CD8-positive, alpha-beta memory T cell (primary cell): ENCODE measurements at regions of chr3 and their contacts with region 1.

Region 1: GRCh38 chr3:13895155-13896105 is 15.6 kb upstream of the WNT7A start:
- DNase-seq: peak; percentile 91 to 95 (median 92)
- H3K4me3 ChIP-seq: peak overlapping the region; percentile 71
- H3K4me3 Mint-ChIP-seq: peak overlapping the region; percentile 71 to 98 (median 92)
- H3K27ac ChIP-seq: peak overlapping the region; percentile 66
- H3K27ac Mint-ChIP-seq: peak overlapping the region; percentile 17 to 99 (median 90)
- H3K4me1 ChIP-seq: peaks cover 31% of the 10 kb centered on the region
- H3K4me1 Mint-ChIP-seq: peaks cover 35 to 40% (median 36%) of the 10 kb centered on the region in 3 donors
- H3K27me3 ChIP-seq: no peaks in the 10 kb centered on the region
- H3K27me3 Mint-ChIP-seq: peaks cover 0 to 6% of the 10 kb centered on the region in 2 donors

Region 2: GRCh38 chr3:13884851-13885703 is 10.4 kb before region 1 on chr3:
- CTCF ChIA-PET with region 1: interaction called, 46 read pairs
- POLR2A ChIA-PET with region 1: interaction called, 3 read pairs
- DNase-seq: peak; percentile 51 to 77 (median 59)
- H3K4me3 ChIP-seq: no peak overlapping the region
- H3K4me3 Mint-ChIP-seq: peak overlapping the region in 1 of 7 donors; percentile 20
- H3K27ac ChIP-seq: no peak overlapping the region
- H3K27ac Mint-ChIP-seq: no peak overlapping the region
- H3K4me1 ChIP-seq: peaks cover 13% of the 10 kb centered on the region
- H3K4me1 Mint-ChIP-seq: peaks cover 6 to 11% (median 7%) of the 10 kb centered on the region in 3 donors
- H3K27me3 ChIP-seq: peaks cover 20% of the 10 kb centered on the region
- H3K27me3 Mint-ChIP-seq: peaks cover 22 to 39% of the 10 kb centered on the region in 2 donors

Region 3: GRCh38 chr3:14124615-14125190 is 229.3 kb after region 1 on chr3 and contains the starts of genes CHCHD4 and TMEM43:
- CTCF ChIA-PET with region 1: interaction called, 12 read pairs
- POLR2A ChIA-PET with region 1: no interaction called
- DNase-seq: peak; percentile 97 to 100 (median 98)
- H3K4me3 ChIP-seq: peak within 1 kb of the TSS; percentile 99
- H3K4me3 Mint-ChIP-seq: peak within 1 kb of the TSS; percentile 93 to 99 (median 97)
- H3K27ac ChIP-seq: peak within 1 kb of the TSS; percentile 94
- H3K27ac Mint-ChIP-seq: peak within 1 kb of the TSS; percentile 95 to 99 (median 98)
- H3K4me1 ChIP-seq: peaks cover 34% of the 10 kb centered on the region
- H3K4me1 Mint-ChIP-seq: peaks cover 54 to 73% (median 65%) of the 10 kb centered on the region in 3 donors
- H3K27me3 ChIP-seq: no peaks in the 10 kb centered on the region
- H3K27me3 Mint-ChIP-seq: peaks cover 0 to 5% of the 10 kb centered on the region in 2 donors
- total RNA-seq, gene CHCHD4: 21.7 to 21.8 TPM
- total RNA-seq, gene TMEM43: 48.8 to 49.4 TPM

Region 4: GRCh38 chr3:14178247-14179113 is 283.1 kb after region 1 on chr3 and contains the starts of genes LSM3 and XPC:
- CTCF ChIA-PET with region 1: interaction called, 7 read pairs
- POLR2A ChIA-PET with region 1: interaction called, 10 read pairs
- DNase-seq: peak; percentile 96 to 100 (median 98)
- H3K4me3 ChIP-seq: peak within 1 kb of the TSS; percentile 79
- H3K4me3 Mint-ChIP-seq: peak within 1 kb of the TSS; percentile 92 to 100 (median 98)
- H3K27ac ChIP-seq: peak within 1 kb of the TSS; percentile 96
- H3K27ac Mint-ChIP-seq: peak within 1 kb of the TSS; percentile 94 to 100 (median 99)
- H3K4me1 ChIP-seq: peaks cover 44% of the 10 kb centered on the region
- H3K4me1 Mint-ChIP-seq: peaks cover 58 to 82% (median 79%) of the 10 kb centered on the region in 3 donors
- H3K27me3 ChIP-seq: no peaks in the 10 kb centered on the region
- H3K27me3 Mint-ChIP-seq: peaks cover 0 to 2% of the 10 kb centered on the region in 2 donors
- total RNA-seq, gene LSM3: 25.8 to 26.6 TPM
- total RNA-seq, gene XPC: 38.8 to 38.9 TPM

Region 5: DNA sequence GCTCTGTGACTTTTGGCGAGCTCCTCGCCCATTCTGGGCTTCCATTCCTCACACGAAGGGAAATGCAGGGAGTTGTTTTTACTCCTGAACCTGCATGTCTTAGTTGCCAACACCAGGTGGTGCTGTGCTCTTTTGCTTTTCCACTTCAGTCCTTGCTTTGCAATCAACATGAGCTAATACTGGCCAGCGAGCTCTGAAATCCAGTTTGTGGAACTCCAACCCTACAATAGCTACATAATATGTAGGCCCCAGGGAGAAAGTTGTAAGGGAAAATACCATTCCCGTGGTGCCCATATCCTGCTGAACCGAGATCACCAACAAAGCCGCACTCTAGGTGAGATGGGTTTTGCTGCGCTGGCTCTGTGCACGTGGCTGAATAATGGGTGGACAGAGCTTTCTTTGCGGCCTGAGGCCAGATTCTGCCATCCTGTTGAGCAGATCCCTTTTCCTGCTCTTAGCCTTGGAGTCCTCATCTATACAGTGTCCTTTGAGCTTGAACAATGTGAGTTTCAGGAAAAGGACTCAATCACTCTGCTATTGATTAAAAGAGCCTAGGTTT is 308.2 kb after region 1 on chr3:
- CTCF ChIA-PET with region 1: interaction called, 19 read pairs
- POLR2A ChIA-PET with region 1: no interaction called
- DNase-seq: peak in 4 of 5 donors; percentile 10 to 62 (median 24)
- H3K4me3 ChIP-seq: no peak overlapping the region
- H3K4me3 Mint-ChIP-seq: no peak overlapping the region
- H3K27ac ChIP-seq: no peak overlapping the region
- H3K27ac Mint-ChIP-seq: peak overlapping the region in 2 of 8 donors; percentile 42 to 49
- H3K4me1 ChIP-seq: no peaks in the 10 kb centered on the region
- H3K4me1 Mint-ChIP-seq: peaks cover 5 to 6% (median 5%) of the 10 kb centered on the region in 3 donors
- H3K27me3 ChIP-seq: no peaks in the 10 kb centered on the region
- H3K27me3 Mint-ChIP-seq: no peaks in the 10 kb centered on the region

Region 6: DNA sequence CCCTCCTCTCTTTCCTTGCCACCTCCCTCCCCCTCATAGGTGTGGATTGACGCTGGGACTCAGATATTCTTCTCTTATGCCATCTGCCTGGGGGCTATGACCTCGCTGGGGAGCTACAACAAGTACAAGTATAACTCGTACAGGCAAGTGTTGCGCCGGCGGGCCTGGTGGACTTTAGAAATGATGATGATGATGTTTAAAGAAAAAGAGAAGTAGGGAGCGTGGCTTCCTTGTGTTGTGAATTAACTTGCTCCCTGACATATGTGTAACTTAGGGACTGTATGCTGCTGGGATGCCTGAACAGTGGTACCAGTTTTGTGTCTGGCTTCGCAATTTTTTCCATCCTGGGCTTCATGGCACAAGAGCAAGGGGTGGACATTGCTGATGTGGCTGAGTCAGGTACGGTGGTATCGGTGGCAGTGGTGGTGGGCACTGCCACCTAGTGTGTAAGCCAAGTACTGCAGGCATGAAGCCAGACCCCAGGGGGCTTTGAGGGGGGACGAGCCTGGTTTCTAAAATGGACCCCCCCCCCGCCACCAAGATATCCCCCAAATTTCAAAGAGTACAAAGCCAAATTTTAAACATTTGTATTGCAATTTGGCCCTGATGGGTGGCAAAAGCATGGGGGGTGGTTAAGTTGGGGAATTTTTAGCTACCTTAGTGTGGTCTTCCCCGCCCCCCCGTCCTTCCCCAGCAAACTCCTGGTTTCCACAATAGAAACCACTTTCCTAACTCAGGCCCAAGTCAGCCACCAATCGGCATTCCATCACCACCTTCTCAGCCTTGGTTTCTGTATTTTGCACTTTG is 572.6 kb after region 1 on chr3:
- CTCF ChIA-PET with region 1: interaction called, 14 read pairs
- POLR2A ChIA-PET with region 1: no interaction called
- DNase-seq: peak; percentile 18 to 65 (median 38)
- H3K4me3 ChIP-seq: no peak overlapping the region
- H3K4me3 Mint-ChIP-seq: no peak overlapping the region
- H3K27ac ChIP-seq: no peak overlapping the region
- H3K27ac Mint-ChIP-seq: peak overlapping the region in 3 of 8 donors; percentile 40 to 83 (median 66)
- H3K4me1 ChIP-seq: no peaks in the 10 kb centered on the region
- H3K4me1 Mint-ChIP-seq: peaks cover 0 to 3% (median 0%) of the 10 kb centered on the region in 3 donors
- H3K27me3 ChIP-seq: no peaks in the 10 kb centered on the region
- H3K27me3 Mint-ChIP-seq: no peaks in the 10 kb centered on the region